Dendritic cell treated with granulocyte-macrophage colony-stimulating factor and Interleukin-4, amounts not matched to agents 40 ng/mL and 50 ng/mL, for 4 days (primary cell): ENCODE measurements at regions of chr5 and their contacts with region 1.

Region 1: GRCh38 chr5:115544436-115545350 is at the start of gene FEM1C:
- H3K4me3 Mint-ChIP-seq: peak within 1 kb of the TSS; percentile 95
- H3K27ac Mint-ChIP-seq: peak within 1 kb of the TSS; percentile 99
- H3K4me1 Mint-ChIP-seq: peaks cover 16% of the 10 kb centered on the region
- H3K27me3 Mint-ChIP-seq: peaks cover 1% of the 10 kb centered on the region

Region 2: DNA sequence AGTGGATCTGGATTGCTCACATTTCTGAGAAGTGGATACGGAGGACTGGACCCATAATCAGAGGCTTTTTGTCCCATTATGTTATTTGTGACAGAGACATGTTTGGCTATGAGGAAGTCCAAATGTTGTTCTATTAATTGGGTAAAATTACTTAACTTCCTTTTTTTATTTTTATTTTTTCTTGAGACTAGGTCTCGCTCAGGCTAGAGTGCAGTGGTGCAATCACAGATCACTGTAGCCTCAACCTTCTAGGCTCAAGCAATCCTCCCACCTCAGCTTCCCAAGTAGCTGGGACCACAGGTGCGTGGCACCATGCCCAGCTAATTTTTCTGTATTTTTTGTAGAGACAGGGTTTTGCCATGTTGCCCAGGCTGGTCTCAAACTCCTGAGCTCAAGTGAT is 270.1 kb before region 1 on chr5:
- intact Hi-C with region 1: no loop called
- H3K4me3 Mint-ChIP-seq: no peak overlapping the region
- H3K27ac Mint-ChIP-seq: peak overlapping the region; percentile 63
- H3K4me1 Mint-ChIP-seq: peaks cover 39% of the 10 kb centered on the region
- H3K27me3 Mint-ChIP-seq: no peaks in the 10 kb centered on the region

Region 3: GRCh38 chr5:115450741-115451140 is 94.0 kb before region 1 on chr5:
- intact Hi-C with region 1: loop called (anchors 10 kb)
- H3K4me3 Mint-ChIP-seq: no peak overlapping the region
- H3K27ac Mint-ChIP-seq: peak overlapping the region; percentile 93
- H3K4me1 Mint-ChIP-seq: peaks cover 45% of the 10 kb centered on the region
- H3K27me3 Mint-ChIP-seq: peaks cover 4% of the 10 kb centered on the region

Region 4: DNA sequence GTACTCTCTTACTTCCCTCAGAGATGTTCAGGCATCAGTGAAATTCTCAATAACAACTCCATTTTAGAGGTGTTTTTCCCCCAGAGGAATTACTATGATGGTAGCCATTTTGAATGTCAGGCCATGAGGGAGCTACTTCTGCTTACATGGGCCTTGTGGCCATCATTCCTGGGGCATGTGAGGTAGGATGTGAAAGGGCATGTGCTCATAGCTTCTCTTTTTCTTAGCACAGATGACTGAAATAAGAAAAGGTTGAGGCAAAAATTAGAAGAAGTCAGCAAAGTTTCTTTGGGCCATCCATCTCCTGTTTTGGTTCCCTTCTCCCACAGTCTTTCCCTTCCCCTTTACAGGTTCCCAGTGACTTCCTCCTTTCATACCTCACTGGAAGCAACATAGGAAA is 68.9 kb before region 1 on chr5:
- intact Hi-C with region 1: loop called (anchors 5 kb)
- H3K4me3 Mint-ChIP-seq: no peak overlapping the region
- H3K27ac Mint-ChIP-seq: peak overlapping the region; percentile 89
- H3K4me1 Mint-ChIP-seq: peaks cover 79% of the 10 kb centered on the region
- H3K27me3 Mint-ChIP-seq: no peaks in the 10 kb centered on the region

Region 5: GRCh38 chr5:115601701-115602590 is 57.3 kb after region 1 on chr5 and contains the start of gene TICAM2:
- intact Hi-C with region 1: loop called (anchors 1 kb)
- H3K4me3 Mint-ChIP-seq: peak within 1 kb of the TSS; percentile 83
- H3K27ac Mint-ChIP-seq: peak within 1 kb of the TSS; percentile 94
- H3K4me1 Mint-ChIP-seq: peaks cover 59% of the 10 kb centered on the region
- H3K27me3 Mint-ChIP-seq: no peaks in the 10 kb centered on the region

Region 6: DNA sequence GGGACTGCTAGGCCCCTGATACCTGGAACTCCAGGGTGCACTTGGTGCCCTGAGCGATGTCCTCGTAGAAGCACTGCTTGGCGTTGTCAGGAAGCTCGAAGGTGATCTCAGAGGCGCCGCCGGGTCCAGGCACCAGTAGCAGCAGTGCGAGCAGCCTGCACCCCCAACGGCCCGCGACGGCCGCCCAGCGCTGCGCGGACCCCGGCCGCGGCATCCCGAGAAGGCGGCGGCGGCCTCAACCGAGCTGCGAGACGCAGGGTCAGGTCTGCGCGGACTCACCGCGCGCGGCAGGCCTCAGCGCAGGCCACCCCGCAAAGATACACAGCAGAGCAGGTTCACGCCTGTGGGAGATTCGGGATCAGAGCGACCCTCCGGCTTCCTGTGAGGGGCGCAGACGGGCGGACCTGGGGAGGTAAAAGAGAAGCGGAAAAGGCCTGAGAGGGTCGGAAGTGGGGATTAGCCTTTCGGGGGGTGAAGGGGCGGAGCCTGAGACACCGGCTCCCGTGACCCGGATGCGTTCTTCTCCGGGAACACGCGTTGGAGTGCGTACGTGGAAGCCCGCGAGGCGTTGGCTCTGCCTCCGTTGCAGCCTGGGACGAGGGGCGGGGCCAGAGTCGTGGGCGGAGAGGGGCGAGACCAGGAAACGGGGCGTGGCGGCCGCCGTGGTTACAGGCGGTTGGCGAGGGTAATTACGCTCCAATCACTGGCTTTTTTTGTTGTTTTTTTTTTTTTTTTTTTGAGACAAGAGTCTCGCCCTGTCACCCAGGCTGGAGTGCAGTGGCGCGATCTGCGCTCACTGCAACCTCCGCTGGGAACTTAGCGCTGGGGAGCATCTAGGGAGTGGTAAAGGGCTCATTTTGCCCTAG is 81.1 kb after region 1 on chr5 and contains the start of gene TMED7:
- intact Hi-C with region 1: loop called (anchors 2 kb)
- H3K4me3 Mint-ChIP-seq: no peak within 1 kb of the TSS
- H3K27ac Mint-ChIP-seq: no peak within 1 kb of the TSS
- H3K4me1 Mint-ChIP-seq: peaks cover 19% of the 10 kb centered on the region
- H3K27me3 Mint-ChIP-seq: no peaks in the 10 kb centered on the region